Motor neuron (in vitro differentiated cells): ENCODE measurements at regions of chr21 and their contacts with region 1.

Region 1: DNA sequence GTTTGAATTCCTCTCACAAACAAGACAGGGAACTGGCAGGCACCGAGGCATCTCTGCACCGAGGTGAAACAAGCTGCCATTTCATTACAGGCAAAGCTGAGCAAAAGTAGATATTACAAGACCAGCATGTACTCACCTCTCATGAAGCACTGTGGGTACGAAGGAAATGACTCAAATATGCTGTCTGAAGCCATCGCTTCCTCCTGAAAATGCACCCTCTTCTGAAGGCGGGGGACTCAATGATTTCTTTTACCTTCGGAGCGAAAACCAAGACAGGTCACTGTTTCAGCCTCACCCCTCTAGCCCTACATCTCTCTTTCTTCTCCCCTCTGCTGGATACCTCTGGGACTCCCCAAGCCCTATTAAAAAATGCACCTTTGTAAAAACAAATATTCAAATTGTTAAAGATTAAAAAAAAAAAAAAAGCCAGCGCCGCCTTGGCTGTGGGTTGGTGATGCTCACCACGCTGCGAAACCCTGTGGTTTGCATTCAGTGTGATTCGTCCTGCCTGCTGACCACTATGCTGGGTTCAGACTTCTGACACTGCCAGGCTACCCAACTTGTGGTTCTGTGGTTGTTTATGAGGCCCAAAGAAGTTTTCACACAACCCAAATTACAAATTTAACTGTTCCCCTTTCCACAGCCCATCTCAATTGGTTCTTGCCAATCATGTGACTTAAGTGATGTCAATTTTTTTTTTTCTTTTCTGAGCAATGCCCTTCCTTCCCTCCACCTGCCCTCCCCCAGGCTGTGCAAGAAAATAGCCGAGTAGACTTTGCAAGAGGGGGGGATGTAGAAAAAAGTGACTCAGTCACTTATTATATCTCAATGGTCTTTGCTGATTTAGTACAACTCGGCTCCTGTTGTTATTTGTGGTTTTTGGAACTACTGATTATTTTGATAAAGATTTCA is at the start of gene RUNX1:
- ATAC-seq: no peak
- H3K4me3 ChIP-seq: no peak within 1 kb of the TSS
- H3K27ac ChIP-seq: no peak within 1 kb of the TSS
- H3K4me1 ChIP-seq: peaks cover 11 to 26% of the 10 kb centered on the region in 2 donors
- total RNA-seq, gene RUNX1: 0.05 to 49.0 (median 3.6) TPM

Region 2: GRCh38 chr21:35138665-35139381 is 89.9 kb after region 1 on chr21:
- in situ Hi-C with region 1: loop called in 1 of 9 experiments (anchors 25 kb)
- ATAC-seq: peak in 5 of 8 experiments; percentile 28 to 57 (median 51)
- H3K4me3 ChIP-seq: no peak overlapping the region
- H3K27ac ChIP-seq: no peak overlapping the region
- H3K4me1 ChIP-seq: peaks cover 4 to 5% of the 10 kb centered on the region in 2 donors